Heart left ventricle (tissue), 16 donors: ENCODE measurements at regions of chr22 and their contacts with region 1.

Region 1: GRCh38 chr22:41285820-41286638 is at the start of gene RANGAP1:
- DNase-seq: peak; percentile 98 to 99 (median 99)
- ATAC-seq: peak; percentile 99 to 100 (median 100)
- H3K4me3 ChIP-seq: peak within 1 kb of the TSS; percentile 59 to 97 (median 80)
- H3K27ac ChIP-seq: peak within 1 kb of the TSS; percentile 56 to 91 (median 82)
- H3K4me1 ChIP-seq: peaks cover 0 to 34% (median 17%) of the 10 kb centered on the region in 12 donors
- H3K27me3 ChIP-seq: no peaks in the 10 kb centered on the region
- CTCF ChIP-seq: peak in 10 of 12 donors; percentile 11 to 52 (median 27)
- POLR2A ChIP-seq: peak in 1 of 2 donors; percentile 90
- total RNA-seq, gene RANGAP1: 27.7 to 75.6 (median 35.0) TPM

Region 2: GRCh38 chr22:41367039-41367679 is 81.1 kb after region 1 on chr22:
- intact Hi-C with region 1: loop called in 2 of 10 experiments (anchors 2 to 5 kb)
- DNase-seq: peak; percentile 98
- ATAC-seq: peak; percentile 94 to 97 (median 96)
- H3K4me3 ChIP-seq: peak overlapping the region in 11 of 12 donors; percentile 7 to 82 (median 47)
- H3K27ac ChIP-seq: peak overlapping the region in 11 of 12 donors; percentile 15 to 87 (median 75)
- H3K4me1 ChIP-seq: peaks cover 5 to 37% (median 26%) of the 10 kb centered on the region in 12 donors
- H3K27me3 ChIP-seq: no peaks in the 10 kb centered on the region
- CTCF ChIP-seq: peak in 9 of 12 donors; percentile 12 to 70 (median 37)
- POLR2A ChIP-seq: peak in 1 of 2 donors; percentile 45

Region 3: DNA sequence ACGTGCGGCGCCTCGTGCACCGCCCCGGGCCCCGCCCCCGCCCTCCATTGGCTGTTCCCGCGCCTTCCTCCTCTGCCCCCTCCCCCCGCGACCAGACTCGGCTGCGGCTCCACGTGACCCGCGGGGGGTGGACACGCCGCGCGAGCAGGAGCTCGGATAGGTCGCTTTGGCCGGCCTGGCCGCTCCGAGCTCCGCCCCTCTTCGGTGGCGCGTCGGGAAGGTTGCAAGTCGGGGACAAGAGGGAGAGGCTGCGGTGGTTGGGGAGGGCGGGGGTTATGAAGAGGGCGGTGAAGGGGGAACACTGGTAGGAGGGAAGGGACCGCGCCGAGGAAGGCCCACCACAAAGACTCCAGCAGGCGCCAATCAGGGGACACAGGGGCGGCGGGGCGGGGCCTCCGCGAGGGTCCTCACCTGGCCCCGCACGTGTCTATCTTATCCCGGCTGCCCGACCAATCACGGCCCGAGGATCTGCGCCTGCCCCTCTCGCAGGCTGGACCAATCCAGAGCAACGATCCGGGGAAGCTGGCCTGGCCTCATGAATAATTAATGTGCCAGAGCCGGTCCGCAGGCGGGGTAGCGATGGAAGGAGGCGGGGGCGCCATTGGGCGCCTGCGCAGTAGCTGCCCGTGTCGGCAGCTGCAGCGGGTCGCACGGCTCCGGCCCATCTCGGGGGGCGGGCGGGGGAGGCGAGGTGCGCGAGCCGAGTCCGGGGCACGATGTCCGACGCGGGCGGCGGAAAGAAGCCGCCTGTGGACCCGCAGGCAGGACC is 95.5 kb after region 1 on chr22 and contains the start of gene TEF:
- intact Hi-C with region 1: loop called in 1 of 10 experiments (anchors 1 kb)
- DNase-seq: peak; percentile 99
- ATAC-seq: peak; percentile 89 to 93 (median 91)
- H3K4me3 ChIP-seq: peak within 1 kb of the TSS; percentile 57 to 100 (median 89)
- H3K27ac ChIP-seq: peak within 1 kb of the TSS; percentile 88 to 100 (median 97)
- H3K4me1 ChIP-seq: peaks cover 0 to 36% (median 25%) of the 10 kb centered on the region in 12 donors
- H3K27me3 ChIP-seq: no peaks in the 10 kb centered on the region
- CTCF ChIP-seq: no peak
- POLR2A ChIP-seq: peak in 1 of 2 donors; percentile 51
- total RNA-seq, gene TEF: 7.2 to 35.3 (median 19.6) TPM